ENCODE measurements at regions of chr6 and their contacts with region 1.

Region 1: GRCh38 chr6:44475779-44476434 is 88.4 kb downstream of the CDC5L start:
- DNase-seq: peak; percentile 80 to 87
- ATAC-seq: peak; percentile 80 to 91 (median 88)
- H3K4me3 ChIP-seq: no peak overlapping the region
- H3K27ac ChIP-seq: no peak overlapping the region
- H3K4me1 ChIP-seq: peaks cover 27% of the 10 kb centered on the region
- H3K27me3 ChIP-seq: no peaks in the 10 kb centered on the region
- CTCF ChIP-seq: peak; percentile 95

Region 2: DNA sequence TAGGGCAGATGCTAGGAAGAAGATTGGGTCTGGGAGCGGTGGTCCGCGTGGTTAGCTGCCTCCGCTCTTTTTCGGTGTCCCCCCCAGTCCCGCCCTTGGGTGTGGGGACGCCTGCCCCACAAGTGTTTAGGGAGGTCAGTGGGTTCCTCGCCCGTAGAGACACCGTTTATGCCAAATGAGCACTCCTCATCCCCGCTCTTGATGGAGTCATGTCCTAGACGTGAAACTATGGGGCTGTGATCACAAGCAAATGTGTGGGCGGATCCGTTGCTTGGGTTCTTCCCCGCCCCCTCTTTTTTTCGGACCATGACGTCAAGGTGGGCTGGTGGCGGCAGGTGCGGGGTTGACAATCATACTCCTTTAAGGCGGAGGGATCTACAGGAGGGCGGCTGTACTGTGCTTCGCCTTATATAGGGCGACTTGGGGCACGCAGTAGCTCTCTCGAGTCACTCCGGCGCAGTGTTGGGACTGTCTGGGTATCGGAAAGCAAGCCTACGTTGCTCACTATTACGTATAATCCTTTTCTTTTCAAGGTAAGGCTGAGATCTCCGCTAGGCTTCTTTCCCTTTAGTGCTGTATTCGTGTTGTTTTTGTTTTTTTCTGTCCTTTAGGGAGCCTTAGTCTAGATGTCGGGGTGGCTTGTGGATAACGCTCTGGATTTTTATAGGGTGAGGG is 229.1 kb before region 1 on chr6 and contains the start of gene HSP90AB1:
- intact Hi-C with region 1: no loop called
- DNase-seq: peak; percentile 93 to 96
- ATAC-seq: peak; percentile 84 to 86 (median 84)
- H3K4me3 ChIP-seq: peak within 1 kb of the TSS; percentile 82
- H3K27ac ChIP-seq: peak within 1 kb of the TSS; percentile 100
- H3K4me1 ChIP-seq: peaks cover 30% of the 10 kb centered on the region
- H3K27me3 ChIP-seq: no peaks in the 10 kb centered on the region
- CTCF ChIP-seq: no peak
- total RNA-seq, gene HSP90AB1: 1,150 to 1,595 (median 1,339) TPM

Region 3: GRCh38 chr6:44569931-44570385 is 94.1 kb after region 1 on chr6:
- intact Hi-C with region 1: no loop called
- DNase-seq: peak; percentile 44 to 76
- ATAC-seq: peak; percentile 44 to 63 (median 56)
- H3K4me3 ChIP-seq: no peak overlapping the region
- H3K27ac ChIP-seq: no peak overlapping the region
- H3K4me1 ChIP-seq: peaks cover 7% of the 10 kb centered on the region
- H3K27me3 ChIP-seq: no peaks in the 10 kb centered on the region
- CTCF ChIP-seq: no peak

Region 4: DNA sequence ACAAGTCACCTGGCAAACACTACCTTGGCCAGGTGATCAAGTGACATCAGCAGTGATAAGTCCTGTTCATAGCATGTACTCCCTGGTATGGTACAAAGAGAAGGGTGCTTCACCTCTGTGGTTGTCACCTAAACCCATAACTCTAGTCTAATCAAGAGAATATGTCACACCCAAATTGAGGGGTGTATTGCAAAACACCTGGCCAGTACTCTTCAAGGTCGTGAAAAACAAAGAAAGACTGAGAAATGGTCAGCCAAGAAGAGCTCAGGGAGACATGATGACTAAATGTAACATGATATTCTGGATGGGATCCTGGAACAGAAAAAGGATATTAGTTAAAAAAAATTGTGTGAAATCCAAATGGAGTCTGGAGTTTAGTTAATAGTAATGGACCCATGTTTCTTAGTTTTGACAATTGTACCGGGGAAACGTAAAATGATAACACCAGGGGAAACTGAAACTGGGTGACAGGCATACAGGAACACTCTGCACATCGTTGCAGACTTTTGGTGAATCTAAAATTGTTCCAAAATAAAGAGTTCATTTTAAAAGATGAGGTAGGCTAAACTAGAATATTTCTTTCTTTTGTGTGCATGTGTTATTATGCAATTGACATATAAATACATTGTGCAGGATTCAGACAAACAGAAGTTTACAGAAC is 173.6 kb after region 1 on chr6:
- intact Hi-C with region 1: loop called (anchors 5 kb)
- DNase-seq: no peak
- ATAC-seq: peak in 2 of 4 donors; percentile 16 to 38
- H3K4me3 ChIP-seq: no peak overlapping the region
- H3K27ac ChIP-seq: no peak overlapping the region
- H3K4me1 ChIP-seq: no peaks in the 10 kb centered on the region
- H3K27me3 ChIP-seq: no peaks in the 10 kb centered on the region
- CTCF ChIP-seq: no peak

Region 5: GRCh38 chr6:45445749-45446549 is 970.0 kb after region 1 on chr6:
- intact Hi-C with region 1: loop called in 1 of 2 experiments (anchors 10 kb)
- DNase-seq: peak; percentile 59 to 62
- ATAC-seq: peak; percentile 92 to 95 (median 94)
- H3K4me3 ChIP-seq: peak overlapping the region; percentile 37
- H3K27ac ChIP-seq: peak overlapping the region; percentile 89
- H3K4me1 ChIP-seq: peaks cover 22% of the 10 kb centered on the region
- H3K27me3 ChIP-seq: no peaks in the 10 kb centered on the region
- CTCF ChIP-seq: no peak

Region 6: GRCh38 chr6:45922728-45923351 is 1446.9 kb after region 1 on chr6:
- intact Hi-C with region 1: loop called (anchors 5 to 10 kb)
- DNase-seq: peak; percentile 59 to 79
- ATAC-seq: peak; percentile 62 to 87 (median 70)
- H3K4me3 ChIP-seq: no peak overlapping the region
- H3K27ac ChIP-seq: no peak overlapping the region
- H3K4me1 ChIP-seq: peaks cover 26% of the 10 kb centered on the region
- H3K27me3 ChIP-seq: no peaks in the 10 kb centered on the region
- CTCF ChIP-seq: peak; percentile 54